PC-9 (cell line): ENCODE measurements at regions of chr1 and their contacts with region 1.

Region 1: GRCh38 chr1:157138220-157139051 is at the start of gene ETV3:
- DNase-seq: peak; percentile 88 to 90
- H3K4me3 ChIP-seq: peak within 1 kb of the TSS; percentile 86
- H3K27ac ChIP-seq: peak within 1 kb of the TSS; percentile 78
- H3K4me1 ChIP-seq: peaks cover 41% of the 10 kb centered on the region
- H3K27me3 ChIP-seq: no peaks in the 10 kb centered on the region
- CTCF ChIP-seq: no peak
- total RNA-seq, gene ETV3: 22.1 and 26.2 TPM in 2 replicates

Region 2: DNA sequence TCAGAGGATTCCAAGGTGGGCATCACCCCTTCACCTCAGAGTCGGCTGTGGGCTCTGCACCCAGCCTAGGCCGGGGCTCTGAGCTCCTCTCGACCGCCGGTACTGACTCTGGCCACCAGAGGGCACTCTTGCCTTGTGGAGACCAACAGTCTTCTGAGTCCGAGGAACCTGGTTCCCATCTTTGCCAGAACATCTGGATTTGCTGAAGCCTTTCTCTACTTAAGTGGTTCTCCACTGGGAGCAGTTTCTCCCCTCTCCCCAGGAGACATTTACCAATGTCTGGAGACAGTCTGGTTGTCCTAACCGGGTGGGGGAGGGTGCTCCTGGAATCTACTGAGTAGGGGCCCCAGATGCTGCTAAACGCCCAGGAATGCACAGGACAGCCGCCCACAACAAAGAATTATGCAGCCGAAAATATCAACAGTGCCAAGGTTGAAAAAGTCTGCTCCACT is 48.2 kb before region 1 on chr1:
- CTCF ChIA-PET with region 1: interaction called, 6 read pairs
- POLR2A ChIA-PET with region 1: no interaction called
- intact Hi-C with region 1: loop called (anchors 1 kb)
- DNase-seq: peak; percentile 62 to 76
- H3K4me3 ChIP-seq: no peak overlapping the region
- H3K27ac ChIP-seq: no peak overlapping the region
- H3K4me1 ChIP-seq: peaks cover 21% of the 10 kb centered on the region
- H3K27me3 ChIP-seq: no peaks in the 10 kb centered on the region
- CTCF ChIP-seq: peak; percentile 95

Region 3: DNA sequence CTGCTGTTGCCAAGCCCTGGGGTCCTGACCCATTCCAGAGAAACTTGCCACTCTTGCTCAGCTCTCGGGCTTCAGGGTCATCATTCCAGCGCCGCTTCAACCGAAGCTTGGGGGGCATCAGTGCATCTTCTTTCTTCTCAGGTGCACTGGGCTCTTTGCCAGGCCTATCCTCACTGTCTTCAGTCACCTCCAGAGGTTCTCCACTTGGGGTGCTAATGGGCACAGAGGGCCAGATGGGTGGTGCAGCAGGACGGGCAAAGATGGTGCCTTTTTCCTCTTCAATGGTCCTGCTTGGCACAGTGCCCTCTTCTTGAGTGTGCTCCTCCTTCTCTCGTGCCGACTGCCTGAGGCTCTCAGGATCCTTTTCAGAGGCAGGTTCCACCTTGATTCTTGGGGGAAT is 13.6 kb before region 1 on chr1:
- CTCF ChIA-PET with region 1: no interaction called
- POLR2A ChIA-PET with region 1: interaction called, 11 read pairs
- intact Hi-C with region 1: no loop called
- DNase-seq: no peak
- H3K4me3 ChIP-seq: no peak overlapping the region
- H3K27ac ChIP-seq: no peak overlapping the region
- H3K4me1 ChIP-seq: no peaks in the 10 kb centered on the region
- H3K27me3 ChIP-seq: no peaks in the 10 kb centered on the region
- CTCF ChIP-seq: no peak

Region 4: GRCh38 chr1:157170677-157171515 is 32.5 kb after region 1 on chr1:
- CTCF ChIA-PET with region 1: no interaction called
- POLR2A ChIA-PET with region 1: no interaction called
- intact Hi-C with region 1: no loop called
- DNase-seq: peak; percentile 34 to 41
- H3K4me3 ChIP-seq: no peak overlapping the region
- H3K27ac ChIP-seq: no peak overlapping the region
- H3K4me1 ChIP-seq: no peaks in the 10 kb centered on the region
- H3K27me3 ChIP-seq: peaks cover 61% of the 10 kb centered on the region
- CTCF ChIP-seq: peak; percentile 74

Region 5: DNA sequence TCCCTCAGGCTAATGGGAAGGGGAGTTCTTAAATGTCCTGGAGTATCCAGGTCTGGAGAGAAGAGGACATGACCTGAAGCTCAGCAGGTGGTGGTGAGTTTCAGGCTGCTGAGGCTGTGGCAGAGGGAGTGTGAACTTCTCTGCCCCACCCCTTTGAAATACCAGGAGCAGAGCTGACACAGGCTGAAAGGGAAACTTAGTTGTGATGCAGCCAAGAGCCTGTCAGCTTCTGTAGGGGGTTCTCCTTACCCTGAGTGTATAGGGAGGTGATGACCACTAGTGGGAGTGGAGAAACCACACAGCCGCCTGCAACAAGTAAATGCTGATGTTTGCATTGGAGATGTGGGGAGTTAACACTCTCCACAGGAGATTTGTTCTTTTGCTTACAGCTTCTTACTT is 261.5 kb after region 1 on chr1:
- CTCF ChIA-PET with region 1: no interaction called
- POLR2A ChIA-PET with region 1: no interaction called
- intact Hi-C with region 1: no loop called
- DNase-seq: no peak
- H3K4me3 ChIP-seq: no peak overlapping the region
- H3K27ac ChIP-seq: no peak overlapping the region
- H3K4me1 ChIP-seq: no peaks in the 10 kb centered on the region
- H3K27me3 ChIP-seq: no peaks in the 10 kb centered on the region
- CTCF ChIP-seq: no peak